Naive thymus-derived CD4-positive, alpha-beta T cell (primary cell): ENCODE measurements at regions of chr13 and their contacts with region 1.

Region 1: DNA sequence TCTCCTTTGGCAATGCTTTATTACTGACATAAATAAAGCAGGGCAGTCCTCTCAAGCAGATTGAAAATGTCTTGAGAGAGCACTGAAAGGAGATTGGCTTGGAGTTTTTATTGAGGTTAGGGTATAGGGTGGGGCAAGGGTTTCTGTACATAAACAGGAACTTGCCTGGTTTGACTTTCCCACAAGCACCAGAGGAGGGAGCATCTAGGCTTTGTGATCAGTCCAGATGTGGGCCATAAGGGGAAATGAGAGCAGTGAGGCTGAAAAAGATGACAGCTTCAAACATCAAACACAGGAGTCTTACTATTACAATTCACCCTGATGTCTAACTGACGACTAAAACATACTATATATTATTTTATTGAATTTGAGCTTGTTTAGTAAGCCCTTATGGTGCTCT is 260.9 kb downstream of the MTUS2 start:
- DNase-seq: peak in 6 of 9 donors; percentile 8 to 50 (median 19)
- ATAC-seq: peak; percentile 83
- H3K4me3 ChIP-seq: no peak overlapping the region
- H3K4me3 Mint-ChIP-seq: peak overlapping the region in 4 of 10 donors; percentile 15 to 49 (median 26)
- H3K27ac ChIP-seq: no peak overlapping the region
- H3K27ac Mint-ChIP-seq: peak overlapping the region in 4 of 9 donors; percentile 10 to 75 (median 38)
- H3K4me1 ChIP-seq: no peaks in the 10 kb centered on the region
- H3K4me1 Mint-ChIP-seq: peaks cover 0 to 20% (median 10%) of the 10 kb centered on the region in 7 donors
- H3K27me3 ChIP-seq: no peaks in the 10 kb centered on the region
- H3K27me3 Mint-ChIP-seq: no peaks in the 10 kb centered on the region

Region 2: DNA sequence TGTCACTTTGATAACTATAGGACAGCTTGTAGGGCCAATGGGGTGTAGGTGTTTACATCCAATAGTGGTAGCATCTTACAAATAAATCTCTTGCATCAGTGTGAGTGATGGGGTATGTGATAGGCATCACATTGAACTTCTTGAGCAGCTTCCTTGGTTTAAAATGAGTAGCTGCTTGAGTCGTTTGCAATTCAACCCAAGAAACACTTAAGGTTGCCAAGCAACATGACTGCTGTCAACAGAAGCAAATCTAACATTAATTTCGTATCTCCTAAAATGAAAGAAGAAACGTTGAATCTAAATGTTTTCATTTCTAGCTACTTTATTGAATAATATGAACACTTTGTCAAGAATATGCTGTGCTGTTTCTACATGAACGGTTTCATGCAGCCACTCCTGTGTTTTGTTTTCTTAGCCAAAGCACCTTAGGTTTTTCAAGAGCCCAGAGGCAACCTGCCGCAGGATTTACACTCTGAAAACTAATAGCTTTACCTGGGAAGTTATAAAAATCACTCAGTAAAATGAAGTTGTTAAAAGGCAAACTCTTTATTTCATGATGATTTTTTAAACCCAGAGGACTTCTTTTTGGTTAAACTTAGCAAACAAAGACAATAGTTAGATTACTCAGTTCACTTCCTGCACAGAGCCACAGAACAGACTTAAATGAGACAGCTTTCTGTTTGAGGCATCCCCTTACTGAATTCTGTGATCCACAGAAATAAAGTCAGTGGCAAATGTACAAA is 44.3 kb after region 1 on chr13:
- CTCF ChIA-PET with region 1: no interaction called
- POLR2A ChIA-PET with region 1: no interaction called
- intact Hi-C with region 1: loop called in 1 of 2 experiments (anchors 2 kb)
- DNase-seq: peak in 1 of 9 donors; percentile 3
- ATAC-seq: peak; percentile 77
- H3K4me3 ChIP-seq: no peak overlapping the region
- H3K4me3 Mint-ChIP-seq: no peak overlapping the region
- H3K27ac ChIP-seq: no peak overlapping the region
- H3K27ac Mint-ChIP-seq: peak overlapping the region in 2 of 9 donors; percentile 43 to 65
- H3K4me1 ChIP-seq: peaks cover 0 to 5% of the 10 kb centered on the region in 2 donors
- H3K4me1 Mint-ChIP-seq: peaks cover 0 to 12% (median 6%) of the 10 kb centered on the region in 7 donors
- H3K27me3 ChIP-seq: peaks cover 0 to 3% of the 10 kb centered on the region in 2 donors
- H3K27me3 Mint-ChIP-seq: no peaks in the 10 kb centered on the region

Region 3: GRCh38 chr13:29266261-29266660 is 185.2 kb after region 1 on chr13:
- CTCF ChIA-PET with region 1: no interaction called
- POLR2A ChIA-PET with region 1: no interaction called
- intact Hi-C with region 1: loop called in 1 of 2 experiments (anchors 2 kb)
- DNase-seq: no peak
- ATAC-seq: no peak
- H3K4me3 ChIP-seq: no peak overlapping the region
- H3K4me3 Mint-ChIP-seq: no peak overlapping the region
- H3K27ac ChIP-seq: no peak overlapping the region
- H3K27ac Mint-ChIP-seq: no peak overlapping the region
- H3K4me1 ChIP-seq: no peaks in the 10 kb centered on the region
- H3K4me1 Mint-ChIP-seq: peaks cover 0 to 1% (median 0%) of the 10 kb centered on the region in 7 donors
- H3K27me3 ChIP-seq: no peaks in the 10 kb centered on the region
- H3K27me3 Mint-ChIP-seq: peaks cover 0 to 14% (median 7%) of the 10 kb centered on the region in 5 donors

Region 4: DNA sequence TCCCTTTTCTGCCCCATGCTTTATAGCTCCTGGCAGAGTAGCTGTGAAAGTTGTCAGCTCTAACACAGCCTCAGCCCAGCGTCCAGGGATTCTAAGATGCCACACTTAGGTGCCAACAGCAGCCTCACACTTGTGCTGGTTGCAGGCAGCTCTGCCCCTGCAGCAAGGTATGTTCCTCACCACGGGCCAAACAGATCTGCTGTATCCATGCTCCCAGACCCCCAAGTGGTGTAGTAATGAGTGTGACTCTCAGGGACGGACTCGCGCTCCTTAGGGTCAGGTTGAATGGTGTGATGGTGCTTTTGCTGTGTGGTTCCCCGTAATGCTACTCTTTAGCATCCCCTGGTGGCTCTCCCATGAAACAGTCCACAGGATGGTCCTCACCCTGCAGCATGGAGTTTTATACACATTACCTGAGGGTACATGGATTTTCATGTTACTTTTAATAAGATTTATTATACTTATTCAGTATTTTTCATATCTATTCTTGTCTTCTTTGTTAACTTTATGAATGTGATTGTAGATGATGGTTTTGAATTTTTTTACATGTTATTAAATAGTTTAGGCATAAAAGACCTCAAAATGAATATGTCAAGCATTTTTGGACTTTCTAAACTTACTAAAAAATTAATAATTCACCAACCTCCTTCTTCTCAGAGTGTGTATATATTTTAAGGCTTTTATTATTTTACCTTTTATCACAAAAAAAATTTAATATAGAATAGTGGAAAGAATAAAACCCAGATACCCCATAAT is 282.0 kb after region 1 on chr13:
- CTCF ChIA-PET with region 1: no interaction called
- POLR2A ChIA-PET with region 1: no interaction called
- intact Hi-C with region 1: loop called (anchors 1 kb)
- DNase-seq: peak in 5 of 9 donors; percentile 7 to 25 (median 16)
- ATAC-seq: peak; percentile 83
- H3K4me3 ChIP-seq: no peak overlapping the region
- H3K4me3 Mint-ChIP-seq: peak overlapping the region in 7 of 10 donors; percentile 5 to 51 (median 20)
- H3K27ac ChIP-seq: no peak overlapping the region
- H3K27ac Mint-ChIP-seq: no peak overlapping the region
- H3K4me1 ChIP-seq: no peaks in the 10 kb centered on the region
- H3K4me1 Mint-ChIP-seq: peaks cover 0 to 4% (median 0%) of the 10 kb centered on the region in 7 donors
- H3K27me3 ChIP-seq: no peaks in the 10 kb centered on the region
- H3K27me3 Mint-ChIP-seq: peaks cover 7 to 25% (median 11%) of the 10 kb centered on the region in 5 donors